CD8-positive, alpha-beta memory T cell (primary cell): ENCODE measurements at regions of chr18 and their contacts with region 1.

Region 1: DNA sequence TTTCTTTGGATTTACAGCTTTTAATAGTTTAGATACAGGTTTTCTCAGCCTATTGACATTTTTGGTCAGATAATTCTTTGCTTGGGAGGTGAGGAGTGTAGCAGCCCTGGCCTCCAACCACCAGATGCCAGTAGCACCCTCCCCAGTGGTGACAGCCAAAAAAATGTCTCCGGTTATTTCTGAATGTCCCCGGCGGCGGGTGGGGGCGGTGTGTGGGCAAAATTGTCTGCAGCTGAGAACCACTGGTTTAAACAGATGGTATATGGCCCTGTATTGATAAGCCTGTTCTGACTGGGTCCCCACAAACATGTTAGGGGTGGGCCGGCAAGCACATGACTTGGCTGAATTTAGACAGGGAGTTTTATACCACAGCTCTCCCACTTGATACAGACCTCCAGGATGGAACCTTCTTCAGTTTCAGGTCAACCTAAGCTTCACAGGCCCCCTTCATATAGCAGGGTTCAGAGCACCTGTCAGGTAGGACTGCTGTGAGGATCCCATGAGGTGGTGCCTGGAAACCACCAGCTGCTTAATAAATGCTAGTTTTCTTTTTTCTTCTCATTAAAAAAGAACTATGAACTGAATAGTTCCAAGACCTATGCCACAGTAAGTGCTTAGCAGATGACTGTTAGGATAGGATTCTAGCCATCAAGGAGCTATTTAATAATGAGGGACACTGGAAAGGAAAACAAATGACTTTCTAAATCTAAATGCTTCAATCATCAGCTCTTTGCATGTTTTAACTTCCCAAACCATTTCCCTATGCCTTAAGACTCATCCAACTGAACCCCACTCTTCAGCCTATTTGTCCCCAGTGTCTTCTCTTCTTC is 18.1 kb downstream of the LPIN2 start:
- DNase-seq: peak; percentile 41 to 84 (median 73)
- H3K4me3 ChIP-seq: no peak overlapping the region
- H3K4me3 Mint-ChIP-seq: peak overlapping the region; percentile 39 to 86 (median 72)
- H3K27ac ChIP-seq: peak overlapping the region; percentile 39
- H3K27ac Mint-ChIP-seq: peak overlapping the region; percentile 15 to 85 (median 73)
- H3K4me1 ChIP-seq: peaks cover 59% of the 10 kb centered on the region
- H3K4me1 Mint-ChIP-seq: peaks cover 71 to 82% (median 82%) of the 10 kb centered on the region in 3 donors
- H3K27me3 ChIP-seq: no peaks in the 10 kb centered on the region
- H3K27me3 Mint-ChIP-seq: peaks cover 0 to 1% of the 10 kb centered on the region in 2 donors

Region 2: GRCh38 chr18:2948038-2948437 is 46.8 kb before region 1 on chr18:
- CTCF ChIA-PET with region 1: interaction called, 12 read pairs
- POLR2A ChIA-PET with region 1: no interaction called
- DNase-seq: no peak
- H3K4me3 ChIP-seq: no peak overlapping the region
- H3K4me3 Mint-ChIP-seq: no peak overlapping the region
- H3K27ac ChIP-seq: no peak overlapping the region
- H3K27ac Mint-ChIP-seq: peak overlapping the region in 3 of 8 donors; percentile 15 to 87 (median 26)
- H3K4me1 ChIP-seq: peaks cover 13% of the 10 kb centered on the region
- H3K4me1 Mint-ChIP-seq: peaks cover 51 to 79% (median 70%) of the 10 kb centered on the region in 3 donors
- H3K27me3 ChIP-seq: no peaks in the 10 kb centered on the region
- H3K27me3 Mint-ChIP-seq: no peaks in the 10 kb centered on the region

Region 3: GRCh38 chr18:3012964-3013804 is 18.4 kb after region 1 on chr18 and contains the start of gene LPIN2:
- CTCF ChIA-PET with region 1: interaction called, 27 read pairs
- POLR2A ChIA-PET with region 1: no interaction called
- DNase-seq: peak; percentile 91 to 99 (median 98)
- H3K4me3 ChIP-seq: peak within 1 kb of the TSS; percentile 55
- H3K4me3 Mint-ChIP-seq: peak within 1 kb of the TSS; percentile 93 to 97 (median 97)
- H3K27ac ChIP-seq: peak within 1 kb of the TSS; percentile 66
- H3K27ac Mint-ChIP-seq: peak within 1 kb of the TSS; percentile 94 to 98 (median 96)
- H3K4me1 ChIP-seq: peaks cover 71% of the 10 kb centered on the region
- H3K4me1 Mint-ChIP-seq: peaks cover 58 to 72% (median 67%) of the 10 kb centered on the region in 3 donors
- H3K27me3 ChIP-seq: no peaks in the 10 kb centered on the region
- H3K27me3 Mint-ChIP-seq: peaks cover 2 to 3% of the 10 kb centered on the region in 2 donors
- total RNA-seq, gene LPIN2: 82.9 to 83.2 TPM

Region 4: DNA sequence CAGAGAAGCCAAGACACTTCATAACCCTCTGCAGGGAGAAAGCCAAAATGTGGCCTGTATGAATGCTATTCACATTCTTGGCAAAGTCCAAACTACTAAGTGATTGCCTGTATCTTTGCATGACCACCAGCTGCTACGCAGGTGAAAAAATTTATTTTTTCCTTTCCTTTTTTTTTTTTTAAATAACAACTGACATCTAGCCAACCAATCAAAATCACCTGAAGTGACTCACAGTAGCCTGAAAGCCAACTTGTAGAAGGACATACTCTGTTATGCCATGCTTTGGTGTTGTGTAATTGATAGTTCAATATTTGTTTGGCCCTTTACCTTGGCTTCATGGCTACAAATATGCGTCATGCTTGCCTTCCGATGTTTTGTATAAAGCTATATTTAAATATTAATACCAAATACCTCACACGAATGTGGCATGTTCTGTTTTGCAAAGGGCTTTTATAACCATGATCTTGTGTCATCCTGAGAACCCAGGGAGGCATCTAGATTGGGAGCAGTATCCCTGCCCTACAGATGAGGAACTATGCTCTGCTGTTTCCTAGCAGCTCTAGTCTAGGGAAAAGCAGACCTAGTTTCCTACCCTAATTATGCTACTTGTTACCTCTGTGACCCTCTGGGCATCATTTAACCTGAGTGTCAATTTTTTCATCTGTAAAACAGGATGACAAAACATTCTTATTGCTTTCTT is 122.8 kb after region 1 on chr18:
- CTCF ChIA-PET with region 1: no interaction called
- POLR2A ChIA-PET with region 1: no interaction called
- DNase-seq: no peak
- H3K4me3 ChIP-seq: no peak overlapping the region
- H3K4me3 Mint-ChIP-seq: no peak overlapping the region
- H3K27ac ChIP-seq: no peak overlapping the region
- H3K27ac Mint-ChIP-seq: no peak overlapping the region
- H3K4me1 ChIP-seq: no peaks in the 10 kb centered on the region
- H3K4me1 Mint-ChIP-seq: no peaks in the 10 kb centered on the region
- H3K27me3 ChIP-seq: no peaks in the 10 kb centered on the region
- H3K27me3 Mint-ChIP-seq: no peaks in the 10 kb centered on the region

Region 5: DNA sequence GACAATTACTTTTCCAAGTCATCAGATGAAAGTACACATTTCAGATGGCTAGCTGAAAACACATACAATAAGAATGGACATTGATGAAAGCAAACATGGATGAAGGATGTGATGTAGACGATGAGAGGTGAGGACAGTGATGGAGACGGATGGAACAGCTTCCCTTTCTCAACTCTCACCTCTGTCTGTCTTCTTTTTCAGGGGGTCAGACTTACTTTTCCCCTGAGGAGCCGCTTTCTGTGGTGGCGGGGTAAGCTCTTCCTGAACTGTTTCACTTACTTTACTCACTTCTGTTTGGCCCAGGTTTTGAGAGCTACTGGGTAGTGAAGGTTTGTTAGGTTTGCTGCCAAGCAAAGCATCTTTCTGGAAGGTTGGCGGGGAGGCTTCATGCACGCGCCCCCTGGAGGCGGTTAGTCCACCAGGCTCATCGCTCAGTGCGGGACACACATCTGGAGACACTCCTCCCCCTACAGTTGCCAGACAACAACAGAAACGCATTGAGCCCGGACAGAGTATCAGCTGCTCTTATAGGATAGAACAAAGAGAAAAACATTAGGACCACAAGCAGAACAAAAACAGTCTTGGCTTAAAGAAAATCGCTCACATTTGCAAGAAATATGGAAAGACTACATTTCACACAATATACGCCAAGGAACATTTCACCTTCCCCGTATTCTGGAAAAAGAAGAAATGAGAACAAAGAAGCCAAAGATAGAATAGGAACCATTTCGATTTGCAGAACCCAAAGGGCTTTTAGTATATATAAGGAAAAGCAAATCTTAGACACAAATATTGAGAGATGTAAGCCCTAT is 134.4 kb after region 1 on chr18:
- CTCF ChIA-PET with region 1: interaction called, 72 read pairs
- POLR2A ChIA-PET with region 1: interaction called, 4 read pairs
- DNase-seq: peak; percentile 62 to 84 (median 67)
- H3K4me3 ChIP-seq: no peak overlapping the region
- H3K4me3 Mint-ChIP-seq: no peak overlapping the region
- H3K27ac ChIP-seq: no peak overlapping the region
- H3K27ac Mint-ChIP-seq: peak overlapping the region in 4 of 8 donors; percentile 10 to 58 (median 29)
- H3K4me1 ChIP-seq: peaks cover 8% of the 10 kb centered on the region
- H3K4me1 Mint-ChIP-seq: peaks cover 9% of the 10 kb centered on the region in 3 donors
- H3K27me3 ChIP-seq: no peaks in the 10 kb centered on the region
- H3K27me3 Mint-ChIP-seq: peaks cover 0 to 3% of the 10 kb centered on the region in 2 donors

Region 6: DNA sequence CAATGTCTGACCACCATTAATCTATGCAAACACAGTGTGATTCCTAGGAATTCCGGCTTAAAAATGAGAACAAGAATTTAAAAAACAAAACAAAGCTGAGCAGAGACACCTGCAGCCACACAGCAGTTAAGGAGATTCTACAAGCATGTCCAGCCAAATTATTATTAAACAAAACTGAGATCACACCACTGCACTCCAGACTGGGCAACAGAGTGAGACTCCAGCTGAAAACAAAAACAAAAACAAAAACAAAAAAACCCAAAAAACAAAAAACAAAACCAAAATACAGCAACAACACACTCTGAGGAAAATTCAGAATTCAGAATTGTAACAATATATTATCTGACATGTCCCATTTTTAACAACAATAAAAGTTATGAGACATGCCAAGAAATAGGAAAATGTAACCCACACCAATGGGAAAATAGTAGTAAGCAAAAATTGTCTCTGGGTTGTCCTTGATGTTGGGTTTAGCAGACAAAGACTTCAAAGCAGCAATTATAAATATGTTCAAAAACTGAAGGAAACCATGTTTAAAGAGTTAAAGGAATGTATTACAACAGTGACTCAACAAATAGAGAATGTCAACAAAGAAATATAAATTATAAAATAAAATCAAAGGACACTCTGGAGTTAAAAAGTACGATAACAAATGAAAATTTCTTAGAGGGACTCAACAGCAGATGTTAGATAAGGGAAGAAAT is 205.3 kb after region 1 on chr18:
- CTCF ChIA-PET with region 1: no interaction called
- POLR2A ChIA-PET with region 1: no interaction called
- DNase-seq: no peak
- H3K4me3 ChIP-seq: no peak overlapping the region
- H3K4me3 Mint-ChIP-seq: no peak overlapping the region
- H3K27ac ChIP-seq: no peak overlapping the region
- H3K27ac Mint-ChIP-seq: no peak overlapping the region
- H3K4me1 ChIP-seq: no peaks in the 10 kb centered on the region
- H3K4me1 Mint-ChIP-seq: no peaks in the 10 kb centered on the region
- H3K27me3 ChIP-seq: no peaks in the 10 kb centered on the region
- H3K27me3 Mint-ChIP-seq: peaks cover 0 to 8% of the 10 kb centered on the region in 2 donors

Region 7: DNA sequence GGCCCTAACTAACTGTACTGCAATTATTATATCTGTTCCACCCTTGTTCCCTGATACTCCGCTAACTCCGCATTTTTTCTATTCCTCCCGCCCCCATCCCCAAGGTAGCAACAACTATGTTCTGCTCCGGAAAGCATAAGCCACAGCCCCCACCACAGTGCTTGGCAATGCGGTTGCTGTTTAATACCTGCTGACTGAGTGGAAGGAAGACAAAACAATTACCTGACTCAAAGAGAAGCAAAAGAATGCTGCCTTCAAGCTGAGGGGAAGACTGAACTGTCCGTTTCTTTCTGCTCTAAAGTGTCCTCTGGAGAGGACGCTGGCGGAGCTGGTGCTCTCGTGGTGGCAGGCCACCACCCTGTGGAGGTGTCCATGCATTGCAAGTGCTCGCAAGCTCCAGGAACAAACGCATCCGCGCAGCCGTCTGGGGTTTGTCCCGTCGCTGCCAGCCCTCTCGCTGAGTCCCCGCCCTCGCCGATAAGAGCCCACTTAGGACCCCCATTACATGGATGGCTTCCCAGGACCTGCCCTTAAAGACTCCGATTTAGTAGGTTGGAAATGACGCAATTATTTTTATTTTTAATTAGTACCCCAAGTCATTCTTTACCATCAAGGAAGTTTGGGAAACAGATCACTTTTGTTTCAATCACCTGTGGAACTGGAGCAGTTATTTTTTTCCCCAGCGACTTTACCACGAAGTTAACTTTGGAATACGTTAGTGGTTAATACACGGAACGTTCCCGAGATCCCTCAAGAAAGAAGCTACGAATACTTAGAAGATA is 251.2 kb after region 1 on chr18:
- CTCF ChIA-PET with region 1: interaction called, 42 read pairs
- POLR2A ChIA-PET with region 1: interaction called, 6 read pairs
- DNase-seq: peak; percentile 62 to 83 (median 69)
- H3K4me3 ChIP-seq: peak overlapping the region; percentile 96
- H3K4me3 Mint-ChIP-seq: peak overlapping the region; percentile 92 to 98 (median 94)
- H3K27ac ChIP-seq: peak overlapping the region; percentile 96
- H3K27ac Mint-ChIP-seq: peak overlapping the region; percentile 91 to 98 (median 97)
- H3K4me1 ChIP-seq: peaks cover 23% of the 10 kb centered on the region
- H3K4me1 Mint-ChIP-seq: peaks cover 33 to 53% (median 45%) of the 10 kb centered on the region in 3 donors
- H3K27me3 ChIP-seq: no peaks in the 10 kb centered on the region
- H3K27me3 Mint-ChIP-seq: peaks cover 0 to 2% of the 10 kb centered on the region in 2 donors